Right ventricle myocardium inferior (tissue), 1 donor: ENCODE measurements at regions of chr7 and their contacts with region 1.

Region 1: DNA sequence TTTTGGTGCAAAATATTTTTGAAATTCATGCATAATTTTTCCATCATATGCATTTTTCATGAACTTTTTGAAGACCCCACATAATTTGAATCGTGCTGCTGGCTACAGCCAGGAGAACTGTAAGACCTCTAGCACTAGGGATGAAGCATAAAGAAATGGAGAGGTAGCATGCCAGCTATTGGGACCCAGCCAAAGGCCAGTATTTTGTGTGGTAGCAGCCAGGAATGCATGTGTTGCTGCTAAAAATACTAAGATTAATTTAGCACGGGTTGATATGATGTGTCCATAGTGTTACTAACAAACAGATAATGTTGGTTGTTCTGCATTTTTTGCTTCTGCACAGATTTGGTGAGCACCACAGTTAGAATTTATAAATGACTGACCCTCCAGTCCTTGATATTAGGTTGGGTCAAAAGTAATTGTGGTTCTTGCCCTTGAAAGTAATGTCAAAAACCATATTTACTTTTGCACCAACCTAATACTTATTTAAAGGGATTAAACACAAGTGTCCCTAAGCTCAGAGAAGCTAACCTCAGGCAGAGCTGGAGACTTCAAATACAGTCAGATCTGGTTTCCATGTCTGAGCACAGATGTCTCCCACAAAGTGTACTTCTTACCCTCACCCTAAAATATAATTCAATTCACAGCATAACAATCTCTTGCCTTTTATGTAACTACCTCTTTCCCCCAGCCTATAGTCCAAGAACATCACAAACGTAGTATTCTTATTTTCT is 54.1 kb upstream of the NPSR1 start:
- DNase-seq: no peak
- ATAC-seq: peak; percentile 82

Region 2: DNA sequence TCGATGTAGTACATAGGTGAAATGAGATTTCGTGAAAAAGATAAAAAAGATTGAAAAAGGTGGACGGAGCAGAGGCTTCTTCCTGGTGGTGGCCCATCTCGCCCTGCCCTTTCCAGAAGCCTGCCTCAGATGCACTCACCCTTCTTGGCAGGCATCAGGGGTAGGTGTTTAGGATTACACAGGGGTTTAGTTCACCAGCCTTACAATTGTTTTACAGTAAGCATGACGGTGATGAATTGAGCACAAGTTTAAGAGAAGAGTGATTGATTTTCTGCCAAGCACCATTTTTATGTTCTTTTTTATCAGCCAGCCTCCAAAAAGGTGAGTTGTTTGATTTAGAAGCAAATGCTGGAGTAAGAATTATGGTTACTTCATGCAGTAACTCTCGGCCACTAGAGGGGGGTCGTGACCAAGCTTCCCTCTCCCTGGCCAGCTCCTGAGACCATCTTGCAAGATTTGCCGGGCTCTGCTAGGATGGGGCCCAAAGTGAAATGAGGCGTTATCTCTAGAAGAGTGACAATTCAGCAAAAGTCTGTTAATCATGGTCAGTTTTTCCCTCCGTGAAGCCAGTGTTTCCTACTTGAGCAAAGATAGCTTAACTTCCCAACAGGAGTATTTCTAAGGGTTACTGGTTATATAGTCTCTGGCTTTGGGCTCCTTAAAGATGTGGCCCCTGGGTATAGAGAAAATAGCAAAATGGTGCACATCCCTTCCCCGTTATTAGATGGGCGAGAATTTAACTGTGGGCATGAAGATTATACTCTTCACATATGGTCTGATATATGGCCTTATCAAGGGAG is 469.7 kb before region 1 on chr7:
- intact Hi-C with region 1: loop called (anchors 5 kb)
- DNase-seq: peak; percentile 72
- ATAC-seq: peak; percentile 62

Region 3: GRCh38 chr7:34544621-34545020 is 59.3 kb before region 1 on chr7:
- intact Hi-C with region 1: no loop called
- DNase-seq: no peak
- ATAC-seq: no peak